Activated CD8-positive, alpha-beta T cell treated with anti-CD3 and anti-CD28 coated beads for 36 hours (primary cell): ENCODE measurements at regions of chr1 and their contacts with region 1.

Region 1: GRCh38 chr1:111747282-111747734 is 8.1 kb upstream of the INKA2 start:
- DNase-seq: peak; percentile 89
- ATAC-seq: peak; percentile 92
- H3K4me3 Mint-ChIP-seq: no peak overlapping the region
- H3K27ac Mint-ChIP-seq: no peak overlapping the region
- H3K4me1 Mint-ChIP-seq: no peaks in the 10 kb centered on the region
- H3K27me3 Mint-ChIP-seq: peaks cover 6% of the 10 kb centered on the region
- CTCF ChIP-seq: peak; percentile 80

Region 2: DNA sequence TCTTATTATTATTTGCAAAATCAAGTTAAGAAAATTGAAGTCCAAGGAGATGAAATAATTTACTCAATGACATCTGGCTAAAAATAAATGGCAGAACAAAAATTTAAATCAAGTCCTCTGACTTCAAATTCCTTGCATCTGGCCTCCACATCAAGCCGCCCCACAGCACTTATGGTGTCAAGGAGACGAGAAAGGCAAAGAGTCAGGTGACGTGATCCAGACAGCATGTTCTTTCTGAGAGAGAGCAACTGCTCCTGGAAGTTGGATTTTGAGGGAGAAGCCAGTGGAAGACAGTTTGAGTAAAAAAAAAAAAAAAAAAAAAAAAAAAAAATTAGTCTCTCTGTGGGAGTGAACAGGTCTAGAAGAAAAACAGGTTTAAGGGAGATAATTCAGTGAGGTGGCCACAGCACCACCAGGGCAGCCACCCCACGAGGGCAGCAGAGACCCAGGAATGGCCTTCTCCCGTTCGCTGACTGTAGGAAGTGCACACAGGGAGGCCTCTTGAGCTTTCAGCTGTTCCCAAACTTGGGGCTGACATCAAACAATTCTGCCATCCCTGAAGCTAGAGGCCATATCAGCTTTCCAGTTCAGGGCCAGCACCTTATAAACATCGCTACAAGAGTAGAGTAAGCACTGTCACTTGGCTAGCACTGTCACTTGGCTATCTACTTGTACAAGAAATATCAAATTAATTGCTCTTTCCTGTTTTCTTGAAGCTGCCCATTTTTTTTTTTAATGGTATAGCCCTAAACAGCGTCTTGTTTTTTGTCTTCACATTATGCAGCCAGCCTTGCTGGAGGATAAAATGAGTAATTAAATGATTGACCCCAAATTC is 265.7 kb before region 1 on chr1:
- CTCF ChIA-PET with region 1: interaction called, 17 read pairs
- POLR2A ChIA-PET with region 1: no interaction called
- intact Hi-C with region 1: no loop called
- DNase-seq: peak; percentile 77
- ATAC-seq: peak; percentile 67
- H3K4me3 Mint-ChIP-seq: no peak overlapping the region
- H3K27ac Mint-ChIP-seq: no peak overlapping the region
- H3K4me1 Mint-ChIP-seq: peaks cover 29% of the 10 kb centered on the region
- H3K27me3 Mint-ChIP-seq: no peaks in the 10 kb centered on the region
- CTCF ChIP-seq: peak; percentile 52